BJ (cell line): ENCODE measurements at regions of chr1 and their contacts with region 1.

Region 1: DNA sequence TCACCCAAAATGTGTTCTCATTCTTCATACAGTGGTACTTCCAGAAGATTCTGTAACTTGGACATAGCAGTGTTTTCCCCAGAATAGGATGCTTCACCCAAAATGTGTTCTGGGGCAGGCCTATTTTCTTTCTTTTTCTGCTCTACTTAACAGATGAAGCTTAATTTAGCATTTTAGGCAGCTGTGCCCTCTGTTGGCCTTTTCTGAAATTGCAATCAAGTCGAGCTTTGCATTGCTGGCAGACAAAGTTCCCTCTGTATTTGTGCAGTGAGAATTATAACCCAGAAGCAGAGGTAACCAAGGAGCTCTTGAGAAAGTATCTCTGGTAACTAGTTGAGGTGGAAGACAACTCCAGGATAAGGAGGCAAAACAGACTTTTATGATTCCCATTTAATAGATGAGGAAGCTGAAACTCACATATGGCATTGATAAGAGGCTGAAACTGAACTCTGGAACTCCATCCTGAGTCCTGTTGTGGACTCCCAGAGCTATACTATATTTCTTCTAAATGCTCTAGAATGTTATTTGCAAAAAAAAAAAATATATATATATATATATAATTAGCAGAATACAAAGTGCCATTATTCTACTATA is 50.3 kb upstream of the L1TD1 start:
- DNase-seq: no peak
- H3K4me3 ChIP-seq: no peak overlapping the region
- H3K27me3 ChIP-seq: no peaks in the 10 kb centered on the region
- CTCF ChIP-seq: peak; percentile 80

Region 2: GRCh38 chr1:62082456-62083363 is 61.6 kb before region 1 on chr1:
- CTCF ChIA-PET with region 1: interaction called, 37 read pairs
- POLR2A ChIA-PET with region 1: no interaction called
- DNase-seq: no peak
- H3K4me3 ChIP-seq: no peak overlapping the region
- H3K27me3 ChIP-seq: no peaks in the 10 kb centered on the region
- CTCF ChIP-seq: peak; percentile 95

Region 3: GRCh38 chr1:62093261-62093660 is 51.1 kb before region 1 on chr1:
- CTCF ChIA-PET with region 1: interaction called, 11 read pairs
- POLR2A ChIA-PET with region 1: no interaction called
- DNase-seq: no peak
- H3K4me3 ChIP-seq: no peak overlapping the region
- H3K27me3 ChIP-seq: no peaks in the 10 kb centered on the region
- CTCF ChIP-seq: no peak

Region 4: GRCh38 chr1:62131093-62131725 is 13.1 kb before region 1 on chr1:
- CTCF ChIA-PET with region 1: interaction called, 59 read pairs
- POLR2A ChIA-PET with region 1: no interaction called
- DNase-seq: no peak
- H3K4me3 ChIP-seq: no peak overlapping the region
- H3K27me3 ChIP-seq: no peaks in the 10 kb centered on the region
- CTCF ChIP-seq: peak; percentile 97

Region 5: DNA sequence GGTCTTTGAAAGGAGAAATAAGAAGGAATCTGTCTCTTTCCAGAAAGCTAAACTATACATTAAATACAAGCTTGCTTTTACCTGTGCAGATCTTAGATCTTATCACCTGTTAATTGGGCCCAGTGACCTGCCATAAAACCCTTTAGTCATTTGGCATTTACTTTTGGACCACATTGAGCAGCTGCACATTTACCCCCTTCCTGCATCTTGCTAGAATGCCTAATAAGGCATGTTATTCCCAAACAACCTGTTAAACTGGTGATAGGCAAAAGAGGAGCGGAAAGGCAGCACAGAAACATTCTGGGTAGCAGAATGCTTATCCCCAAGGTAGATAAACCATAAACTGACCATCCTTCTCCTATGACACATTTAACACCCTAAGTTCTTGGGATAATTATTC is 10.4 kb after region 1 on chr1:
- CTCF ChIA-PET with region 1: interaction called, 10 read pairs
- POLR2A ChIA-PET with region 1: no interaction called
- DNase-seq: no peak
- H3K4me3 ChIP-seq: no peak overlapping the region
- H3K27me3 ChIP-seq: no peaks in the 10 kb centered on the region
- CTCF ChIP-seq: no peak